Left ventricle myocardium inferior (tissue), 1 donor: ENCODE measurements at regions of chr12 and their contacts with region 1.

Region 1: DNA sequence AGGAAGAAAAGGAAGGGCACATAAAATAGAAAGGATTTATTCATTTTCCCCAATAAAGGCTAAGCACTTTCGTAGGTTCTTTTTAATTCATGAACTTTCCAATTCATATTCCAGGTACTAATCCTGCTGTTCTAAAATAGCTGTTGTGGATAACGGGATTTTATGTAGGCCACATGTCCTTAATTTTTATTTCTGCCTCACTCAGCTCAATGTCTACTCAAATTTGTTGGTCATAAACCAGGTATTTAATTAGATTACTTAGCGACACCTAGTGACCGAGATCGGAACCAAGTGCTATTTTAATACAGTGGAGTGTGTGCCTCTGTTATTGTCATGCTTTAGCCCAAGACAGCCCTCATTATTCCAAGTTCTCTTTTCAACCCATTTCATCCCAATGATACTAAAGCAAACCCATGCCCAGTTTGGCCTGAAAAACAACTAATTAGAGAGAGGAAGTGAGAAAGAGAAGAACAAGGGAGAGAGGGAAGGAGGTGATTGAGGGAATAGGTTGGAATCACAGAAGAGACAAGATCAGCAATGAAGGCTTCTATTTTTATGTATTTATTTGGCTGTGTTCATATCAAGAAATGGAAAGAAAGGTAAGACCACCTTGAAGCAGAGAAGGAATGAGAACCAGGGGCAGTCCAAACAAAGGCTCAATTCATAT is 45.9 kb upstream of the IFNG-AS1 start:
- DNase-seq: no peak
- H3K4me3 ChIP-seq: no peak overlapping the region
- H3K27ac ChIP-seq: peak overlapping the region; percentile 38
- H3K4me1 ChIP-seq: peaks cover 22% of the 10 kb centered on the region
- H3K27me3 ChIP-seq: no peaks in the 10 kb centered on the region
- CTCF ChIP-seq: peak; percentile 80

Region 2: DNA sequence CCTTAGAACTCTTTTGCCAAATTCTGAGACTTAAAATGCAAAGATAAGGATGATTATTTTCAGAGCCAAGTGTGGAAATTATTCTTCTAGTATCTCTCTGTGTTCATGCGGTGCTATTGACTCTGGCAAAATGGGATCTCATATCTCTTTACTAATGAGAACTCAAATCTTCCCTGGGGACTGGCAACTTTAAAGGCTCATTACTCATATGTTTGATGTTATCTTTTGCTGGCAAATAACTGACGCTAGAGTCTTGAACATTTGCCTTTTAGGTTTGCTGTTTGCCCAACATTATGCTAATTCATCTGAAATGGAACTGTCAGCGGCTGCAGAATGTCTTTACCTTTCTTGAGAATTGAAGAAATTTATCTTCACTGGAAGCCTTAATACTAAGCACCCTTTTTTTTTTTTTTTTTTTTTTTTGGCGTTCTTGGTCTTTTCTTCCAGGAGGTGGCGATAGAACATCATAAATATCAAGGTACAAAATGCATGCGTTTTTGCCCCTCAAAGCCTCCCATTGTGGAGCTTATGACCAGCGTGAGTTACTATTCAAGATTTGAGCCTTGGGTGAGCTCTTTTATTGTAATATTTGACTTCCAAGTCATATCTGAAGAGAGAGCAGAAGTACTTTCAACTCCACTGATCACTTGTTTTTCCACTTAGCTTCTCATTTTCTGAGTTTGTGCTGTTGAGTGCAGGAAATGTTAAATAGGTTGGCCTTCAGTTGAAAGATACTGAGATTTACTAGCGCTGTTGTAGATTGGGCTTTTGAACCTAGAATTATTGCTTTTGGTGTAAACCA is 587.6 kb before region 1 on chr12:
- intact Hi-C with region 1: loop called (anchors 5 kb)
- DNase-seq: no peak
- H3K4me3 ChIP-seq: no peak overlapping the region
- H3K27ac ChIP-seq: peak overlapping the region; percentile 57
- H3K4me1 ChIP-seq: peaks cover 40% of the 10 kb centered on the region
- H3K27me3 ChIP-seq: no peaks in the 10 kb centered on the region
- CTCF ChIP-seq: peak; percentile 68

Region 3: GRCh38 chr12:67441736-67442346 is 501.5 kb before region 1 on chr12:
- intact Hi-C with region 1: loop called (anchors 10 kb)
- DNase-seq: peak; percentile 87
- H3K4me3 ChIP-seq: peak overlapping the region; percentile 46
- H3K27ac ChIP-seq: peak overlapping the region; percentile 66
- H3K4me1 ChIP-seq: peaks cover 18% of the 10 kb centered on the region
- H3K27me3 ChIP-seq: no peaks in the 10 kb centered on the region
- CTCF ChIP-seq: peak; percentile 88